ENCODE measurements at regions of chr5 and their contacts with region 1.

Region 1: DNA sequence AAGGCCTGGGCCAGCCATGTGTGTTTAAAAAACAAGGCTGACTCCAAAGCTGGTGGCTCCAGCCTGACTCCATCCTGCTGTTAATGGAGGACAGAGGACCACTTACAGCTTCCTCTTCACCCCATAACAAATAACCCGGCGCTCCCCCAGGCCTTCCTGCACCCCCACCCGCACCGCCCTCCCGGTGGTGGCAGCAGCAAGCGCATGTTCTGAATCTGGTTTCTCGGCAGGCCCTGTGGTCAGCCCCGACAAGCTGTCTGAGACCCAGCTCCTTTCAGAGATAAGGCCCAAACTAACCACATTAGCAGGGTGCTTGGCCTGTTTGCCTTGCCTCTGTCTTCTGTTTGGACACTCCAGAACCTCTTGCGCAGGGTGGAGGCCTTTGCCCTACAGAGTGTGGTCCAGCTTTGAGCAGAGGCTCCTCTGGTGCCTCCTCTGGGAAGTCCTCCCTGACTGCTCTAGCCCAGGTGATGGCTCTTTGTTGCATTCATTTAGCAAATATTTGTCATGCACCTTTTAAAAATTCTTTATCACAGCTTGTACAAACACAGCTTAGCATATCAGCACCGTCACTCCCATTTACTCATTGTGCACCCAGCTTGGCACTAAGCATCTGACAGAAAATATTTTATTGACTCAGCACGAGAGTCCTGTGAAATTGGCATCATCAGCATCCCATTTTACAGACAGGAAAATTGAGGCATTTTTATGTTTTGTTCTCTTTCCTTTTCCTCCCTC is 78.4 kb downstream of the NDFIP1 start:
- DNase-seq: no peak

Region 2: DNA sequence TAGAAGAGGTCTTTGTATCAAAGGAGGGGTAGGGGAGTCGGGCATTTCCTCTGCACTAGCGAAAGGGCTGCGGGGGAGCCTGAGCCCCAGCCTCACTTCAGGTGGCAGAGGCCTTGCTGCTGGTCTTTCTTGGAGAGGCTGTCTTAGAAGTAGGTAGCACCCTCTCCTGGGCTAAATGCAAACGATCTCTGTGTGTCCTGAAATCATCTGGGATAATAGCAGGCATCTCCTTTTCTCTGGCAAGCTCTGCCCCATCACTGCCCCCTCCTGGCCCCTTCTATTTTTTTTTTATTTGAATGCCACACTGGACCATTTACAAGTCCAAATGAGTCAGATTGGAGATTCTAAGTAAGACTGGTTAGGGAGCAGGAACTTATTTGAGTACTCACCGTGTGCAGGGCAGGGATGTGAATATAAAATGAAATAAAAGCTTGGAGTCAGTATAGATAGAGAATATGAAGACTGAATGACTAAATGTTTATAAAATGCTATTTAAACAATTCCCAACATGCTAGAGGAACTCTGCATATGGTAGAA is 361.8 kb after region 1 on chr5:
- in situ Hi-C with region 1: loop called (anchors 25 kb)
- DNase-seq: peak; percentile 91